K562 (cell line): ENCODE measurements at regions of chr3 and their contacts with region 1.

Region 1: GRCh38 chr3:57692259-57693147 is at the start of gene DENND6A:
- DNase-seq: peak; percentile 92 to 95 (median 94)
- ATAC-seq: peak; percentile 97
- H3K4me3 ChIP-seq: peak within 1 kb of the TSS; percentile 73
- H3K27ac ChIP-seq: peak within 1 kb of the TSS; percentile 95
- H3K4me1 ChIP-seq: peaks cover 4 to 7% of the 10 kb centered on the region in 2 experiments; a peak in 3 of 5 replicates
- H3K27me3 ChIP-seq: no peaks in the 10 kb centered on the region
- CTCF ChIP-seq: 0 out of 6 replicates have a peak, but pooled peaks of 1 of the 3 experiments have one; percentile 1
- EP300 ChIP-seq: no peak
- POLR2A ChIP-seq: peak; percentile 90
- RAD21 ChIP-seq: no peak
- polyA plus RNA-seq, gene DENND6A: 1.5 to 2.0 TPM

Region 2: DNA sequence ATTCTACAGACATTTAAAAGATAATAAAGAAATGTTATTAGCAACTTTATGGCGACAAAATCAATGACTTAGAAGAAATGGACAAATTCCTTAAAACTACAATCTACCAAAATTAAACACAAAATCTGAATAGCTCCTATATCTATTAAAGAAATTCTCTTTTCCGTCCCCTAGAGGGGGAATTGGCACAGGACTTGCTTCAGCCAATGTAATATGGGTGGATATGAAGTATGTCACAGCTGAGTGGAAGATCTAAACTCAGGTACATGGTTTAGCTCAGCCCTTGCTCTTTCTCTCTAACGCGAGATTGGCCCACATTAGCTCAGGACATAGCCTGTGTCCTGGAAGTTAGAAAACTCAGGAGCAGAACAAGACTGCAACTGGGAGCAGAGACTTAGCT is 227.7 kb before region 1 on chr3:
- CTCF ChIA-PET with region 1: no interaction called
- POLR2A ChIA-PET with region 1: no interaction called
- in situ Hi-C with region 1: no loop called
- intact Hi-C with region 1: no loop called
- DNase-seq: peak in 1 of 4 experiments; percentile 11
- ATAC-seq: peak; percentile 51; the same call in 2 of the 3 replicates
- H3K4me3 ChIP-seq: no peak overlapping the region
- H3K27ac ChIP-seq: no peak overlapping the region
- H3K4me1 ChIP-seq: no peaks in the 10 kb centered on the region
- H3K27me3 ChIP-seq: peaks cover 0 to 7% of the 10 kb centered on the region in 2 experiments; a peak in 2 of 5 replicates
- CTCF ChIP-seq: peak in 2 of 3 experiments; percentile 10 to 26; a peak in 2 of 6 replicates
- EP300 ChIP-seq: no peak
- POLR2A ChIP-seq: no peak
- RAD21 ChIP-seq: no peak; a peak in 1 of 4 replicates

Region 3: DNA sequence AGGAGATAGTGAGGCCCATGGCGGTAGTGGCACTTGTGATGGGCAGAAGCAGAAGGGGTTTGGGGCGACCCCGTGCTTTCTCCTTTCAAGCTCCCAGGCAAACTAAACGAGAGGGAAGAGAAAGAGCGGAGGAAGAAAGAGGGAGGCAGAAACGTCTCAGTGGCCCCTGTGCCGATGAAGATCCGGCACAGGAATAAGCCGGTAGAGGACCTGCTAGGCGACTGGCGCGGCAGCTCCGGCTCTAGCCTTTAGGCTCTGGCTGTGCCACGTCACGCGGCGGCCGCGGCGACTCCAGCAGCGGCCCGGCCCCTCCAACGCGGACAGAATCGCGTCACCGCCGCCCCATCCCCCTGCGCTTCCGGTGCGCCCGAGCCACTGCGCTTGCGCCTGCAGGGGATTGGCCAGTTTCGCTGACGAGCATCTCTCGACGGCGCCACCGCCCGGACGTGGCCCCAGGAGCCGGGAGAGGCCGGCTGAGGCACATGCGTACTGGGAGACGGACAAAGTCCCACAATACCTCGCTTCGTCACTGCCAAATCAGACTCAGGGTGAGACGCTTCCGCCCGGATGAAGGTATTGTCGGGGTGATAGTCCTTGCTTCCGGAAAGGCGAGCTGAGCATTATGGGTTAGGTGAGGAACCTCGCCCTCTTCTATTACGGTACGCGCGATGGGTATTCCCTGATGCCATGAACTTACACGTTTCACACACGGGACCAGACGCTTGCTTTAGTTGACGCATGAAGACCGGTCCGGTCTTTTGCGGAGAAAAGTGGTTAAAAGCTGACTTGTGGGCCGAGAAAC is 95.2 kb before region 1 on chr3 and contains the start of gene ARF4:
- CTCF ChIA-PET with region 1: no interaction called
- POLR2A ChIA-PET with region 1: interaction called, 3 read pairs
- in situ Hi-C with region 1: no loop called
- intact Hi-C with region 1: loop called (anchors 5 kb)
- DNase-seq: peak; percentile 93 to 98 (median 94)
- ATAC-seq: peak; percentile 90
- H3K4me3 ChIP-seq: peak within 1 kb of the TSS; percentile 85
- H3K27ac ChIP-seq: peak within 1 kb of the TSS; percentile 97
- H3K4me1 ChIP-seq: peaks cover 15 to 16% of the 10 kb centered on the region in 2 experiments; a peak in 4 of 5 replicates
- H3K27me3 ChIP-seq: no peaks in the 10 kb centered on the region
- CTCF ChIP-seq: peak; percentile 23 to 50 (median 37); a peak in 4 of 6 replicates
- EP300 ChIP-seq: no peak; the same call in none of the 2 replicates
- POLR2A ChIP-seq: peak; percentile 97
- RAD21 ChIP-seq: no peak
- polyA plus RNA-seq, gene ARF4: 226 to 273 TPM

Region 4: DNA sequence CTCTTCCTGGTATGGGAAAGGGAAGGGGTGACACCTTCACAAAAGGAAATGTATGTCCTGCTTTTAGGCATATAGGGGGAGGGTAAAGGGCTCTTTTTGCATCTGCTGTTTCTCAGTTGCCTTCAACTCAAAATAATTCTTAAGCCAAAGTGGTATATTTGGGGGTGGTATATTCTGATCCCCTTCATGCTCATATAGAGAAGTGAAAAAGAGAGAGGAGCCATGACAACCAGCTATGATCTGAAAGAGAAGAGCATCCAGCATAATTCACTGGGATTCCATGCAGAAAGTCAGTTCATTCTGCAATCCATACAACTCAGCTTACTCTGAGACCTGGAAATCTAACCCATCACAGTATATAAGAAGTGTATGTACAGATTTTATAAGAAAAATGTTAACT is 22.0 kb before region 1 on chr3:
- CTCF ChIA-PET with region 1: no interaction called
- POLR2A ChIA-PET with region 1: interaction called, 10 read pairs
- in situ Hi-C with region 1: no loop called
- intact Hi-C with region 1: no loop called
- DNase-seq: no peak
- ATAC-seq: no peak
- H3K4me3 ChIP-seq: no peak overlapping the region
- H3K27ac ChIP-seq: no peak overlapping the region
- H3K4me1 ChIP-seq: peaks cover 0 to 7% of the 10 kb centered on the region in 2 experiments; a peak in 1 of 5 replicates
- H3K27me3 ChIP-seq: no peaks in the 10 kb centered on the region
- CTCF ChIP-seq: no peak
- EP300 ChIP-seq: no peak
- POLR2A ChIP-seq: no peak
- RAD21 ChIP-seq: no peak